Lower leg skin (tissue), 4 donors: ENCODE measurements at regions of chr2 and their contacts with region 1.

Region 1: GRCh38 chr2:44044281-44044720 is 48.5 kb upstream of the LRPPRC start:
- DNase-seq: peak; percentile 65 to 95
- H3K4me3 ChIP-seq: no peak overlapping the region
- CTCF ChIP-seq: peak in 1 of 3 donors; percentile 69
- POLR2A ChIP-seq: no peak

Region 2: GRCh38 chr2:43324259-43325106 is 719.8 kb before region 1 on chr2:
- intact Hi-C with region 1: no loop called
- DNase-seq: peak; percentile 87 to 93
- H3K4me3 ChIP-seq: no peak overlapping the region
- CTCF ChIP-seq: no peak
- POLR2A ChIP-seq: no peak

Region 3: GRCh38 chr2:45253151-45253550 is 1208.8 kb after region 1 on chr2:
- intact Hi-C with region 1: loop called (anchors 5 kb)
- DNase-seq: no peak
- H3K4me3 ChIP-seq: no peak overlapping the region
- CTCF ChIP-seq: no peak
- POLR2A ChIP-seq: no peak